Activated CD4-positive, alpha-beta T cell treated with anti-CD3 and anti-CD28 coated beads for 36 hours (primary cell): ENCODE measurements at regions of chr7 and their contacts with region 1.

Region 1: GRCh38 chr7:22885797-22886261 is 63.2 kb upstream of the TOMM7 start:
- DNase-seq: peak; percentile 83
- ATAC-seq: peak; percentile 86
- H3K4me3 Mint-ChIP-seq: peak overlapping the region; percentile 58
- H3K27ac Mint-ChIP-seq: peak overlapping the region; percentile 95
- H3K4me1 Mint-ChIP-seq: peaks cover 44% of the 10 kb centered on the region
- H3K27me3 Mint-ChIP-seq: no peaks in the 10 kb centered on the region

Region 2: GRCh38 chr7:21945454-21946227 is 940.2 kb before region 1 on chr7 and contains the start of gene CDCA7L:
- CTCF ChIA-PET with region 1: no interaction called
- POLR2A ChIA-PET with region 1: no interaction called
- intact Hi-C with region 1: loop called in 1 of 2 experiments (anchors 2 kb)
- DNase-seq: peak; percentile 89
- ATAC-seq: peak; percentile 87
- H3K4me3 Mint-ChIP-seq: peak within 1 kb of the TSS; percentile 82
- H3K27ac Mint-ChIP-seq: peak within 1 kb of the TSS; percentile 85
- H3K4me1 Mint-ChIP-seq: peaks cover 60% of the 10 kb centered on the region
- H3K27me3 Mint-ChIP-seq: peaks cover 4% of the 10 kb centered on the region
- total RNA-seq, gene CDCA7L: 86.9 to 92.1 TPM

Region 3: DNA sequence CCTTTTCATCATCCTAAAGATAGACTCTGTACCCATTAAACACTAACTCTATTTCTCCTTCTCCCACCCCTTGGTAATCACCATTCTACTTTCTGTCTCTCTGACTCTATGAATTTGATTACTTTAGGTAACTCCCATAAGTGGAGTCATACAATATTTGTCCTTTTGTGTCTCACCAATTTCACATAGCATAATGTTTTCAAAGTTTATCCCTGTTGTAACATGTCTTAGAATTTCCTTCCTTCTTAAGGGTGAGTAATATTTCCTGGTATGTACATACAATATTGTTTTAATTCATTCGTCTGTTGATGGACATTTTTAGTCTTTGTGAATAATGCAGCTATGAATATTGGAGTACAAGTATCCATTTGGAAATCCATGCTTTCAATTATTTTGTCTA is 889.2 kb before region 1 on chr7:
- CTCF ChIA-PET with region 1: no interaction called
- POLR2A ChIA-PET with region 1: no interaction called
- intact Hi-C with region 1: no loop called
- DNase-seq: no peak
- ATAC-seq: no peak
- H3K4me3 Mint-ChIP-seq: no peak overlapping the region
- H3K27ac Mint-ChIP-seq: no peak overlapping the region
- H3K4me1 Mint-ChIP-seq: peaks cover 2% of the 10 kb centered on the region
- H3K27me3 Mint-ChIP-seq: peaks cover 4% of the 10 kb centered on the region

Region 4: DNA sequence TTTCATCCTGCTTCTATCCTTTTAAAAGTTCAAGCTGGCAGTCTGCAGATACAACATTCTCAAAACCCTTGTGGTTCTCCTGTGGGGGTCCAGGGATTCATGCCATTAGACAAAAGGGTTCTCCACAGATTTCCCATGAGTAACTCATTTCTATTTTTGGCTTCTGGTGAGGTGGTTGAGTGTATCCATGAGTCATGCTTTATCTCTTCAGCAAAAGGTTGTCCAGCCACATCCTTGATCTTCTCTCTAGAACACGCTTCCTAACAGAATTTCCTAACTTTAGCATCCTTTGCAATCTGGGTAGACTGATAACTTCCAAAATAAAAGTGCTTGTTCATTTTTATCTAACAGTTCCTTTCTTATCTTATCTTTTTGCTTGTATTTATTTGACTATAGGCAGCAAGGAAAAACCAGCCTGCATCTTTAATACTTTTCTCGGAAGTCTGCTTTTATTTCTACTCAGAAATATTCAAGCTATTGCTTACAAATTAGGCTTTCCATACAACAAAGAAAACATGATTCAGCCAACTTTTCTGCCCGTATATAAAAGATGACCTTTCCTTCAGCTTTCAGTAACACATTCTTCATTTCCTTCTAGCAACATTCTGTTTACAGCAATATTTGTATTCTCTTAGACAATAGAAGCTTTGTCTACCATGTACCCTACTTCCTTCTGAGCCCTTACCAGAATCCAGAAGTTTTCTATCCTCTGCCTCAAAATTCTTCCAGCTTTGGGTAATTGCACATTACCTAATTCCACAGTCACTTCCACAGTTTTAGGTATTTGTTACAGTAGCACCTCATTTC is 238.2 kb before region 1 on chr7:
- CTCF ChIA-PET with region 1: no interaction called
- POLR2A ChIA-PET with region 1: no interaction called
- intact Hi-C with region 1: no loop called
- DNase-seq: no peak
- ATAC-seq: no peak
- H3K4me3 Mint-ChIP-seq: no peak overlapping the region
- H3K27ac Mint-ChIP-seq: no peak overlapping the region
- H3K4me1 Mint-ChIP-seq: peaks cover 4% of the 10 kb centered on the region
- H3K27me3 Mint-ChIP-seq: peaks cover 32% of the 10 kb centered on the region

Region 5: DNA sequence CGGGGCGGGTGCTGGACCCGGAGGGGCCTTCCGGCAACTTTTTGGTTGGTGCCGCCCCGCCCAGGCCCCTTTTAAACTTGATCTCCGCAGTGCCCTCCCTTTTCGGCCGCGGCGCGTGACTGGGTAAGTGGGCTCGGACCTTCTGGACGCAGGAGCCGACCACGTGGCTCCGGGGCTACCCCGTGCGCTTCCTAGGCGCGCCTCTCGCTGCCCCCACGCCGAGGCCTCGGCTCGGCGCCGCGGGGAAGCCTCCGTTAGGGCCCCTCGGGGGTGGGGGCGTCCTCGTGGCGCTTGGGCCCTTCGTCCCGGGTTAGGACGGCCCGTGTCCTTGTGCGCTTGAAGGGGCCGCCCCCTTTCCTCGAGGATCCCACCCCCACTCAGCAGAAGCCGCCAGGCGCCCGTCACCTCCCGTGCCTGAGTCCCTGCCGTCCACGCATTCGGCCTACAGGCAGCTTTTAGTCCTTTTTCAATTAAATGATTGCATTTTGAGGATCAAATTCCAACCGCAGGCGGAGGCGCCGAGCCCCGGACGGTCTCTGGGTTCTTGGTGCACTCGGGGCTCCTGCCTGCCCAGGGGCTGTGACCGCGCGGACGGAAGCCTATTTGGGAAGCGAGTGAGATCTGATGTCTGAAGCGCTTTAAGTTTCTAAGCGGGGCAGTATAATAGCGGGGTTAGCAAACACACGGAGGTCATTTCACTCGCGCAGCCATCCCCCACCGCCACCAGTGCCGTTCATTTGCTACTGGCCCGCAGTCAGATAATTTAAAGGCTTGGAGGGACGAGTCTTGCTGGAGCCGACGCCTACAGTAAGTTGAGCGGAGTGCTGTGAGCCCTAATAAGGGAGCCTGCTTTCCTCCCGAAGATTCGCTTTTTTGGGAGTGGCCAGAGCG is 31.4 kb before region 1 on chr7:
- CTCF ChIA-PET with region 1: interaction called, 5 read pairs
- POLR2A ChIA-PET with region 1: interaction called, 6 read pairs
- intact Hi-C with region 1: loop called (anchors 1 to 2 kb)
- DNase-seq: peak; percentile 89
- ATAC-seq: peak; percentile 74
- H3K4me3 Mint-ChIP-seq: peak overlapping the region; percentile 92
- H3K27ac Mint-ChIP-seq: peak overlapping the region; percentile 92
- H3K4me1 Mint-ChIP-seq: peaks cover 34% of the 10 kb centered on the region
- H3K27me3 Mint-ChIP-seq: peaks cover 2% of the 10 kb centered on the region

Region 6: GRCh38 chr7:22992874-22993840 is 107.3 kb after region 1 on chr7:
- CTCF ChIA-PET with region 1: no interaction called
- POLR2A ChIA-PET with region 1: no interaction called
- intact Hi-C with region 1: loop called in 1 of 2 experiments (anchors 5 kb)
- DNase-seq: peak; percentile 63
- ATAC-seq: peak; percentile 58
- H3K4me3 Mint-ChIP-seq: no peak overlapping the region
- H3K27ac Mint-ChIP-seq: no peak overlapping the region
- H3K4me1 Mint-ChIP-seq: peaks cover 39% of the 10 kb centered on the region
- H3K27me3 Mint-ChIP-seq: no peaks in the 10 kb centered on the region

Region 7: DNA sequence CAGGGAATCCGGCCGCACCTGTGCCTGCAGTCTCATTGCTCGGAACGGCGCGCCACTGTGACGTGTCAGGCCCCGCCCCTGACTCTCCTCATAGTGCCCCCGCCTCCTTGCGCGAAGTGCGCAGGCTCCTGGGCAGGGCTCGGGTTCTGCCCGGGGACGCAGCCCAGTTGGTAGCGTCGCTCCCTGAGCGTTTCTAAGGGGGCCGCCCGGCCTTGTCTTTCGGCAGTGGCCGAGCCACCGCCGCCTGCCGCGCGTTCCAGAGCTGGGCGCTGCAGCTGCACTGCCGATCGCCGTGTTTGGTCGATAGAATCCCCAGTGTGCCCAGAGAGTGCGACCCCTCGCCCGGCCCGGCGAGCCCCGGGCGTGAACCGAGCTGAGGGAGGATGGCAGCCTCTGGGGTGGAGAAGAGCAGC is 219.8 kb after region 1 on chr7 and contains the start of gene KLHL7:
- CTCF ChIA-PET with region 1: no interaction called
- POLR2A ChIA-PET with region 1: no interaction called
- intact Hi-C with region 1: loop called in 1 of 2 experiments (anchors 2 kb)
- DNase-seq: peak; percentile 98
- ATAC-seq: peak; percentile 98
- H3K4me3 Mint-ChIP-seq: peak within 1 kb of the TSS; percentile 97
- H3K27ac Mint-ChIP-seq: peak within 1 kb of the TSS; percentile 94
- H3K4me1 Mint-ChIP-seq: peaks cover 32% of the 10 kb centered on the region
- H3K27me3 Mint-ChIP-seq: no peaks in the 10 kb centered on the region
- total RNA-seq, gene KLHL7: 18.1 to 20.8 TPM

Region 8: DNA sequence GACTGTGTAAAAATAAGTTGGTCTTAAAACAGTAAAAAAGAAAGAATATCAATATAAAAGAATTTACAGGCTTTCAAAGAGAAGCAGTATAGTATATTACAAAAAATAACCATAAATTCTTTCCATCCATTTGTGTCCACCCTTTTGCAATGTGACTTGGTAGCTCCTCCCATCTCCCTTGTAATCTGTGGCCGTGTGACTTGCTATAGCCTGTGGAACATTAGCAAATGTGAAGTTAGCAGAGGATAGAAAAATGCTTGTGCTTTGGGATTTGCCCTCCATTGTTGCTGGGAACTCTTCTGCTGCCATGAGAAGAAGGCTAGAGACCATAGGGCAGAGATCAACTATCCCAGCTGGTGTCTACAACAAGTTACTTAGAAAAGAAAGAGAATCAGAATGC is 249.9 kb after region 1 on chr7:
- CTCF ChIA-PET with region 1: no interaction called
- POLR2A ChIA-PET with region 1: no interaction called
- intact Hi-C with region 1: no loop called
- DNase-seq: no peak
- ATAC-seq: no peak
- H3K4me3 Mint-ChIP-seq: no peak overlapping the region
- H3K27ac Mint-ChIP-seq: no peak overlapping the region
- H3K4me1 Mint-ChIP-seq: no peaks in the 10 kb centered on the region
- H3K27me3 Mint-ChIP-seq: no peaks in the 10 kb centered on the region